PC-9 (cell line): ENCODE measurements at regions of chr4 and their contacts with region 1.

Region 1: GRCh38 chr4:169485791-169486742 is 126.3 kb downstream of the NEK1 start:
- DNase-seq: peak; percentile 43 to 48
- H3K4me3 ChIP-seq: no peak overlapping the region
- H3K27ac ChIP-seq: no peak overlapping the region
- H3K4me1 ChIP-seq: peaks cover 4% of the 10 kb centered on the region; the same call in 1 of the 2 replicates
- H3K27me3 ChIP-seq: no peaks in the 10 kb centered on the region
- CTCF ChIP-seq: peak; percentile 68

Region 2: GRCh38 chr4:168587411-168588125 is 898.5 kb before region 1 on chr4:
- CTCF ChIA-PET with region 1: no interaction called
- POLR2A ChIA-PET with region 1: no interaction called
- intact Hi-C with region 1: no loop called
- DNase-seq: peak; percentile 74 to 79
- H3K4me3 ChIP-seq: peak overlapping the region; percentile 39; the same call in 1 of the 2 replicates
- H3K27ac ChIP-seq: peak overlapping the region; percentile 98
- H3K4me1 ChIP-seq: peaks cover 54% of the 10 kb centered on the region
- H3K27me3 ChIP-seq: no peaks in the 10 kb centered on the region
- CTCF ChIP-seq: no peak

Region 3: DNA sequence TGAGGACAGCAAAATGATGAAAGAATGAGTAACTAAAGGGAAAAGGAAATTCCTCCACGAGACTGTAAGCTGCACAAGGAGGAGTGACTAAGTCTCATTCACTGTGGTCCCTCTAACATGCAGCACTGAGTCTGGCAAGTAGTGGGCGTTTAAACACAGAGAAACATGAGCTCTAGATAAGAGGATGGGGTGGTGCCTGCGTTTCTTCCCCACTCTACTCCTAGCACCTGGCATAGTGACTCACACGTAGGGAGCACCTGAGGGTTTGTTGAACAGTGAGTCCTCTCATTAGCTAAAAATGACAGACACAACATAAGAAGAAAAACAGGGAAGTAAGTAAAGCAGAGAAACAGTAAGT is 370.2 kb before region 1 on chr4:
- CTCF ChIA-PET with region 1: interaction called, 3 read pairs
- POLR2A ChIA-PET with region 1: no interaction called
- intact Hi-C with region 1: loop called (anchors 5 kb)
- DNase-seq: peak; percentile 78 to 93
- H3K4me3 ChIP-seq: no peak overlapping the region
- H3K27ac ChIP-seq: peak overlapping the region; percentile 98
- H3K4me1 ChIP-seq: peaks cover 25% of the 10 kb centered on the region
- H3K27me3 ChIP-seq: no peaks in the 10 kb centered on the region
- CTCF ChIP-seq: peak; percentile 49; the same call in 1 of the 2 replicates